Psoas muscle (tissue), 8 donors: ENCODE measurements at regions of chr12 and their contacts with region 1.

Region 1: GRCh38 chr12:818733-819132 is 66.4 kb downstream of the WNK1 start:
- DNase-seq: no peak
- ATAC-seq: no peak
- H3K4me3 ChIP-seq: no peak overlapping the region
- H3K27ac ChIP-seq: peak overlapping the region; percentile 58
- H3K4me1 ChIP-seq: peaks cover 21% of the 10 kb centered on the region
- H3K27me3 ChIP-seq: no peaks in the 10 kb centered on the region
- CTCF ChIP-seq: no peak

Region 2: GRCh38 chr12:857611-858010 is 38.9 kb after region 1 on chr12:
- intact Hi-C with region 1: loop called in 1 of 2 experiments (anchors 5 kb)
- DNase-seq: peak; percentile 64 to 82
- ATAC-seq: peak; percentile 89 to 96 (median 95)
- H3K4me3 ChIP-seq: no peak overlapping the region
- H3K27ac ChIP-seq: peak overlapping the region; percentile 80
- H3K4me1 ChIP-seq: peaks cover 32% of the 10 kb centered on the region
- H3K27me3 ChIP-seq: no peaks in the 10 kb centered on the region
- CTCF ChIP-seq: no peak

Region 3: GRCh38 chr12:949453-950191 is 130.9 kb after region 1 on chr12 and contains the start of gene RAD52:
- intact Hi-C with region 1: loop called in 1 of 2 experiments (anchors 5 kb)
- DNase-seq: peak; percentile 98 to 99
- ATAC-seq: peak; percentile 93 to 94 (median 94)
- H3K4me3 ChIP-seq: peak within 1 kb of the TSS; percentile 95
- H3K27ac ChIP-seq: peak within 1 kb of the TSS; percentile 97
- H3K4me1 ChIP-seq: peaks cover 21% of the 10 kb centered on the region
- H3K27me3 ChIP-seq: no peaks in the 10 kb centered on the region
- CTCF ChIP-seq: peak; percentile 99
- total RNA-seq, gene RAD52: 6.7 to 12.8 (median 9.2) TPM

Region 4: GRCh38 chr12:968545-968944 is 149.8 kb after region 1 on chr12:
- intact Hi-C with region 1: no loop called
- DNase-seq: no peak
- ATAC-seq: no peak
- H3K4me3 ChIP-seq: no peak overlapping the region
- H3K27ac ChIP-seq: no peak overlapping the region
- H3K4me1 ChIP-seq: no peaks in the 10 kb centered on the region
- H3K27me3 ChIP-seq: no peaks in the 10 kb centered on the region
- CTCF ChIP-seq: no peak